Activated CD8-positive, alpha-beta memory T cell treated with anti-CD3 and anti-CD28 coated beads, Interleukin-2, amount 10 ng/mL, durations not matched to agents 7 days and 5 days (primary cell): ENCODE measurements at regions of chr1 and their contacts with region 1.

Region 1: DNA sequence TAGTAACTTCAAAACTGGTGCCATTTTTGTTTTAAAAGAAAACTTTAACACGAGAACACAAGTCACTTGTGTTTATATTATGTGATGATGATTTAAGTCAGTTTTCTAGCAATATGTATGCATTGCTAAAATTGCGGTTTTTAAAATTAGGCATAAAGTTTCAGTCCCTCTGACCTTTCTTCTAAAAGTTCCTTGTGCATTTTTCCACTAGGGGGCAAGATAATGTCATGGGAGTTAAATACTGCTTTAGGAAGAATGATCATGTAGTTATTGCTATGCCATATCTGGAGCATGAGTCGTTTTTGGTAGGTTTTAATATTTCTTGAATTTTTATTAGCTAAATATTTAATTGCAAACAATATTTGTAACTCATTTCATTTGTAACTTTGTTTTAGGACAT is 10.7 kb downstream of the CDC7 start:
- DNase-seq: no peak
- ATAC-seq: no peak
- H3K4me3 Mint-ChIP-seq: no peak overlapping the region
- H3K27ac Mint-ChIP-seq: no peak overlapping the region
- H3K4me1 Mint-ChIP-seq: peaks cover 18% of the 10 kb centered on the region
- H3K27me3 Mint-ChIP-seq: no peaks in the 10 kb centered on the region

Region 2: DNA sequence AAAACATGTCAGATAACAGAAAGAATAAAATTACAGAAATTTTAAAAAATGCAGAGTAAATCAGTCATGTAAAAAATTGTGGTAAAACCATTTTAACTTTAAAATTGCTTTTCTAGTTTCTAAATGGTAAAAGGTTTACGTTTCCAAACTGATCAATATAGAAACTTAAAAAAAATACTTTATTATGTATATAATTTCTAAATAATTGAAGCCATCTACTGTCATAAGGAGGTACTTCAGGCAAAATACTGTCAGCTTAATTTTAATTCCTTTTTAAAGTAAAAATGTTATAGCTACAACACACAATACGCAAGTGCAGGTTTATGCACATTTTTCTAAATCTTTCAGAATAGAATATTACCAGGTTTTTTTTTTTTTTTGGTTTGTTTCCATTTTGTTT is 266.6 kb before region 1 on chr1:
- CTCF ChIA-PET with region 1: no interaction called
- DNase-seq: no peak
- ATAC-seq: no peak
- H3K4me3 Mint-ChIP-seq: no peak overlapping the region
- H3K27ac Mint-ChIP-seq: no peak overlapping the region
- H3K4me1 Mint-ChIP-seq: no peaks in the 10 kb centered on the region
- H3K27me3 Mint-ChIP-seq: peaks cover 17% of the 10 kb centered on the region

Region 3: GRCh38 chr1:91500756-91501522 is 10.4 kb before region 1 on chr1 and contains the start of gene CDC7:
- CTCF ChIA-PET with region 1: interaction called, 14 read pairs
- DNase-seq: peak; percentile 93
- ATAC-seq: peak; percentile 92
- H3K4me3 Mint-ChIP-seq: no peak within 1 kb of the TSS
- H3K27ac Mint-ChIP-seq: no peak within 1 kb of the TSS
- H3K4me1 Mint-ChIP-seq: peaks cover 26% of the 10 kb centered on the region
- H3K27me3 Mint-ChIP-seq: no peaks in the 10 kb centered on the region
- total RNA-seq, gene CDC7: 39.5 to 39.7 TPM

Region 4: GRCh38 chr1:91523482-91523881 is 12.1 kb after region 1 on chr1:
- CTCF ChIA-PET with region 1: interaction called, 14 read pairs
- DNase-seq: peak; percentile 61
- ATAC-seq: peak; percentile 93
- H3K4me3 Mint-ChIP-seq: no peak overlapping the region
- H3K27ac Mint-ChIP-seq: peak overlapping the region; percentile 40
- H3K4me1 Mint-ChIP-seq: peaks cover 29% of the 10 kb centered on the region
- H3K27me3 Mint-ChIP-seq: no peaks in the 10 kb centered on the region

Region 5: DNA sequence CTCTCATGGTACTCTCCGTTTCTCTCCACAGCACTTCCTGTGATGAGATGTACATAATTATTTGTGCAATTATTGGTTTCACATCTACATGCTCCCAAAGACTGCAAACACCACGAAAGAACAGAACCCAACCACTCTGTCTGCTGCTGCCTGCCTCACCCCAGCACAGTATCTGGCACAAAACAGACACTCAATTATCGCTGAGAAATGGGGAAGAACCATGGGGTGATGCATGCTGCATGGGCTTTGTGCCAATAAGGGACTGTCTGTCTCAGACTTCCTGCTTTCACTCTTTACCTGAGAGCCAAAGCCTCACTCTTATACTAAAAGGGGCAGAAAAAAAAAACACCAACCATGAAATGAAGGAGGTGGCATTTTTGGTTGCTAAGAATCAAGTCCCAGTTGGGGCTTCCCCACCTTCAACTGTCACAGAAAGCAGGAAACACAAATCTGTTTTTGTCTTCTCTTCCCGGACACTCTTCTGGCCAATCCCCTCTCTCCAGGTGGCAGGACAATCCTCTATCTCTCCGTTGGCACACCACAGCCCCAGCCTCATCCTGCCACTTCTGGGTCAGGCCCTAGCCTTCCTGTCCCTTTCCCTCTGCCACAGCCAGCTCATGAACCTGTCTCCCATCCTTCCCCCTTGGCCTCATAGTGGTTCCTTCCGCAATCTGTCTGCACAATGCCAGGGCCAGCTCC is 292.6 kb after region 1 on chr1:
- CTCF ChIA-PET with region 1: interaction called, 13 read pairs
- DNase-seq: peak; percentile 81
- ATAC-seq: peak; percentile 62
- H3K4me3 Mint-ChIP-seq: peak overlapping the region; percentile 65
- H3K27ac Mint-ChIP-seq: peak overlapping the region; percentile 88
- H3K4me1 Mint-ChIP-seq: peaks cover 61% of the 10 kb centered on the region
- H3K27me3 Mint-ChIP-seq: peaks cover 14% of the 10 kb centered on the region

Region 6: DNA sequence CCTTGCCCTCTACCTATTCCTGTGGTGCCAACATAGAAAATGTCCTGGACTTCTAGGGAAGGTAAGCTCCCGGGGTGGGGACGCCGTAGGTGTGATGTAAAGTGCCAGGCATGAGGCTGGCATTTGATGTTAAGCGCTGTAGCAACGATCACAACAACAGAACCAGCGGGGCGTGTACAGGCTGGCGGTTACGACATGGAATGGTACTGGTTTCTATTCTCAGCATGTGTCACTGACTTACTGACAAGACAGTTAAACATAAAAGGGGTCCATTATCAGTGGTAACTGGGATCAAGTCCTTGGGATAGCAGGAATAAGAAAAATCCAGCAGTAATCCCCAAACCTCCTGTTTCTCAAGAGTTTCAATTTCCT is 315.7 kb after region 1 on chr1:
- CTCF ChIA-PET with region 1: no interaction called
- DNase-seq: no peak
- ATAC-seq: no peak
- H3K4me3 Mint-ChIP-seq: no peak overlapping the region
- H3K27ac Mint-ChIP-seq: no peak overlapping the region
- H3K4me1 Mint-ChIP-seq: peaks cover 16% of the 10 kb centered on the region
- H3K27me3 Mint-ChIP-seq: no peaks in the 10 kb centered on the region

Region 7: DNA sequence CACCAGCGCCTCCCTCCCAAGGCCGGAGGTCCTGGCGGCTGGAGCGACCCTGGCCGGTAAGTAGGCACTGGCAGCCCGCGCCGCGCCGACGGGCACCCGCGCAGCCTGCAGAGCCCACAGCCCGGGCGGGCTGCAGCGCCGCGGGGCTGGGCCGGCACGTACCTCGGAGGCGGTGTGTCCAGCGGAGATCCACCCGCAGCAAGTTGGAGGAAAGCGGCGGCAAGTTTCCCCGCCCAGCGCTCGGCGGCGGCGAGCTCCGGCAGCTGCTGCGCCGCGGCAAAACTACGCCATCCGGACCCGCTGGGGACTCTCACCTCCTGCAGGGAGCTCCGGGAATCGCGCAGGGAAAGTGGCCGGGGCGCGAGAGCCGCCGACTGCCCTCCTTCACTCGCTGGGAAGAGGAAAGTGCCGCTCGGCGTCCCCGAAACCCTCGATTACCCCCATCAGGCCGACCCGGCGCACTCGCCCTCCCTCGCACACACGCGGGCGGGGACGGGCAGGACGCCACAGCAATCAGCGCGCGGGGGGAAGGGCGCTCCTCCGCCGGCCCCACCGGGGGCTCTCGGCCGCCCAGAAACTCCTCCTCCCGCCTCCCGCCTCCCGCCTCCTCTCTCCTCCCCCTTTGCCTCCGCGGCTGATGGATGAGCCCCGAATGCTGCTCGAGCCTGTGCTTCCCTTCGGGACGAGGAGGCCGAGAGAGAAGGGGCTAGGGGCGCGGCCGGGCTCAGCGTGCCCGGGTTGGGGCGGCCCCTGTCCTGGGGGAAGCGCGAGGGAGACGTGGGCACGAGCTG is 374.5 kb after region 1 on chr1 and contains the start of gene TGFBR3:
- CTCF ChIA-PET with region 1: interaction called, 21 read pairs
- DNase-seq: peak; percentile 73
- ATAC-seq: peak; percentile 86
- H3K4me3 Mint-ChIP-seq: peak within 1 kb of the TSS; percentile 87
- H3K27ac Mint-ChIP-seq: peak within 1 kb of the TSS; percentile 62
- H3K4me1 Mint-ChIP-seq: peaks cover 33% of the 10 kb centered on the region
- H3K27me3 Mint-ChIP-seq: peaks cover 30% of the 10 kb centered on the region
- total RNA-seq, gene TGFBR3: 10.4 to 25.8 TPM

Region 8: DNA sequence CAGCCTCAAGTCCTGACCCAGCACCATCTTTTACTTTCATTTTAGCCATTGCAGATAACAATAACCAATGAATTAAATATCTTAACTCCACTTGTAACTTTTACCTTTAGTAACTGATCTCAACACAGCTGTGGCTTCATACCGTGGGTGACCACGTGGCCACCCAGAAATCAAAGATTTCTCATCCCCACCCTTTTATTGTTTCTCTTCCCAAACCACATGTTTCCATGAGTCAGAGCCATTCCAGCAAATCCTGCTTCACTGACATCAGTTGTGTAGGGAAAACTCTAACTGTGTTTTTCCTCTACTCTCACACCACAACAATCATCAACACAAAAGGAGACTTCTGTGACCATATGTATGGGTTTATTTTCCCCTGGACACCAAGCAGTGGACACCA is 412.8 kb after region 1 on chr1:
- CTCF ChIA-PET with region 1: interaction called, 60 read pairs
- DNase-seq: no peak
- ATAC-seq: no peak
- H3K4me3 Mint-ChIP-seq: no peak overlapping the region
- H3K27ac Mint-ChIP-seq: no peak overlapping the region
- H3K4me1 Mint-ChIP-seq: peaks cover 10% of the 10 kb centered on the region
- H3K27me3 Mint-ChIP-seq: peaks cover 3% of the 10 kb centered on the region